Head of caudate nucleus (tissue), 42 donors: ENCODE measurements at regions of chr10 and their contacts with region 1.

Region 1: DNA sequence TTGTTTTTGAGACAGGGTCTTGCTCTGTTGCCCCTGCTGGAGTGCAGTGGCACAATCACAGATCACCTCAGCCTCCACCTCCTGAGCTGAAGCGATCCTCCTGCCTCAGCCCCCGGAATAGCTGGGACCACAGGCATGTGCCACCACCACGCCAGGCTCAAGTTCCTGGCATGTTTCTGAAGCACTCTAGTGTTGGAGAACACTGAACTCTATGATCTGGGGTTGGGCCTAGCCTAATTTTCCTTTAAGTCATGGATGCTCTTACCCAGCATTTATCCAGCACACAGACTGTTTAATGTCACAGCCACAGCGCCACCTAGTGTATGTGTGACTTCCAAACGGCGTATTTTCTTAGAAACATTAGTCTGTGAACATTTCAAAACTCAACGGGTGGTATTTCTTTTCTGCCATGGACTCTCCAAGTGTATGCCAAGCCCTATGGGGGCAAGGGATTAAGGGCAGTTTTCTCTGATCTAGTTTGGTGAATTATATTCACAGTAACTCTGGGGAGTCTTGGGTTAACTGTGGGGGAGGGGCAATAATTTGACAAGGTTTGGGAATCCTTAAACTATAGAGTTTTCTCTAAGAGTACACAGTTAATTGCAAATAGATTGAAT is 91.8 kb downstream of the CREM start:
- DNase-seq: peak; percentile 55 to 94 (median 84)

Region 2: GRCh38 chr10:35119378-35119777 is 99.1 kb before region 1 on chr10:
- intact Hi-C with region 1: loop called (anchors 2 kb)
- DNase-seq: no peak